ENCODE measurements at regions of chr13 and their contacts with region 1.

Region 1: DNA sequence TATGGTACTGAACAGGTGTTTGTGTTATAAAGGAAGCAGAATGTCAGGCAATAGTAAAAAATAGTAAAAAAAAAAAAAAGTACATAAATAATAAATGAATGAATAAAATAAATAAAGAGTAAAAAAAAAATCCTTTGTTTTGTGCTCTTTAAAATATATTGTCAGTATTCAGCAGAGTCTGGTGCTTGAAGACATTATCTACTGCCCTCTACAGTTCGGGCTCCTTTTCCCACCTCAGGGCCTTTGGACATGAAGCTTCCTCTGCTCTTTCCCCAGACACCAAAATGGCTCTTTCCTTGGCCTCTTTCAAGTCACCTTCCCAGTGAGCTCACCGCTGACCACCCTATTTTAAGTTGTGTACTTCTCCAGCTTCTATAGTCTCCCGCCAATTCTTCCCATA is 137.5 kb downstream of the TNFRSF19 start:
- DNase-seq: no peak

Region 2: DNA sequence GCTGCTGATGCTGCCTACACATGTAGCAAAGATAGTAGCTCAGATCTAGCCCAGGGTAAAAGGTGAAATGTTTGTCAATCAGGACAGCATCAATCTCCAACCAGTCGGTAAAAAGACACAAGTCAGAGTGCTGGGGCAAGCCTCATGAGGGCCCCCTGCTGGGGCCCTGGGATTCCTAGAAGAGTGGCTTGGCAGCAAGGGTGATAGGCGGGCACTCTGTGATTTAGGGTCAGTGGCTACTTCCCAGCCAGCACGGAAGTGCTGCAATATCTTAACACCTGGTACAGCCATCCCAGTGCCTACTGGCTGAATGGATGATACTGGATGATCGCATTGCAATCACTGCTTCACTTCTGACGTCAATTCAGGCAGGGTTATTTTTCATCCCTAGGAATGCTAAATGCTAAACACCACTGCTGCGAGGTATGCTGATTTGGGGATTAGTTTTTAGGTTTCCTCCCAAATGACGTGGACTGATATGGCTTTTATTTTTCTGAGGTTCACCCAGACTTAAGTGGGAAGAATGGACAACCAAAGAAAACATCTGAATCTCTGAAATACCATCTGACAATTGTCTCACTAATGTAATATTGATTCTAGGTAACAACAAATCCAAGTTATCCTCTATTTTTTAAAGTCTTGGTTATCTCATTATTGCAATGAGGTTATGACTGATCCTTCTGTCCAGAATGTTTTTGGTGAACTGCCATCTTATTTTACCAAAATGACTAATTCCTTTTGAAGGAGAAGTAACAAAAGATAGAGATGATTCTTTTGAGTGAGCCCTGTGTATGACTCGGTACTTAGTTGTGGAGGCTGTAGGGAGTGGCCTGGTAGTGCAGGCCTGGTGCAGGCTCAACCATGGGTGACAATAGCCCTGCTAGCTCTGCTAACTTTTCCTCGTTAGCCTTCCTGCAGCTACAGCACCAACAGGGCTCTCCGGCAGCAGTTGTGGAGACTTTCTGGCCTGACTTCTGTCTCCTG is 1604.3 kb before region 1 on chr13:
- intact Hi-C with region 1: loop called in 1 of 2 experiments (anchors 5 kb)
- DNase-seq: no peak

Region 3: GRCh38 chr13:23690668-23691067 is 17.0 kb before region 1 on chr13:
- intact Hi-C with region 1: no loop called
- DNase-seq: no peak

Region 4: GRCh38 chr13:23752111-23753001 is 44.7 kb after region 1 on chr13:
- intact Hi-C with region 1: no loop called
- DNase-seq: no peak